Mammary epithelial cell (primary cell): ENCODE measurements at regions of chr10 and their contacts with region 1.

Region 1: GRCh38 chr10:22682237-22683139 is 31.9 kb downstream of the PIP4K2A start:
- DNase-seq: peak; percentile 91
- H3K4me3 ChIP-seq: peak overlapping the region in 1 of 3 experiments; percentile 20
- H3K27ac ChIP-seq: peak overlapping the region; percentile 93
- H3K4me1 ChIP-seq: peaks cover 40% of the 10 kb centered on the region
- H3K27me3 ChIP-seq: no peaks in the 10 kb centered on the region
- CTCF ChIP-seq: no peak

Region 2: DNA sequence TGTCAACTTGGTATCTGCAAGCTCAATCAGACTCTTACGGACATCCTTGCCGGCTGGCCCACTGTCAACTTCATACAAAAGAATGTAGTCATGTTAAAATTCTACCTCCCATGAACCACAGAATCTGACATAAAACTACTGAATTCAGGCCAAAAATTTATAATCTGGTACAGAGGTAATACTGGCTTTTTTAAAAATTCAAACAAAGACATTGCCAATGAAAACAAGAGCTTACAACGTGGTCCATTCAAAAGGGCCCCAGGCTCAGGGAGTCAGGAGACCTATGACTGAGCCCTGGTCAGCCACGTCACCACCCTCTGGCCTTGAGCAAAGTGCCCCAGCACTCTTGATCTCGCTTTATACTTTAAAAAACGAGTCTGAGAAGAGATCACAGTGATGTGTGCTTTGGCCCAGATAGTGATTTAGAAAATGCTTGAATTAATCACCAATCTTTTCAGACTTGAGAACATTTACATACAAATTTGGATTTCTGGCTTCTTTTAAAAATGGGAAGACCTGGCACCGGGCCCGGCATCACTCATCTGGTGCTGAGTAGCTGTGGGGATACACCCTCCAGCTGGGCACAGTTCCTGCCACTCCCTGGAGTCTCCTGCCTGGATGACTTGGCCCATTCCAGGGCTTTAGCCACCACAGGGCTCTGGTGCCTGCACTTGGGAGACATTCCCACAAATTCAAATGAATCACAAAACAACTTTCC is 62.2 kb before region 1 on chr10:
- CTCF ChIA-PET with region 1: no interaction called
- dilution Hi-C with region 1: no loop called
- in situ Hi-C with region 1: no loop called
- intact Hi-C with region 1: loop called (anchors 5 kb)
- DNase-seq: peak; percentile 93
- H3K4me3 ChIP-seq: peak overlapping the region in 1 of 3 experiments; percentile 8
- H3K27ac ChIP-seq: peak overlapping the region; percentile 89
- H3K4me1 ChIP-seq: peaks cover 42% of the 10 kb centered on the region
- H3K27me3 ChIP-seq: no peaks in the 10 kb centered on the region
- CTCF ChIP-seq: no peak